GM12878 (cell line): ENCODE measurements at regions of chr16 and their contacts with region 1.

Region 1: DNA sequence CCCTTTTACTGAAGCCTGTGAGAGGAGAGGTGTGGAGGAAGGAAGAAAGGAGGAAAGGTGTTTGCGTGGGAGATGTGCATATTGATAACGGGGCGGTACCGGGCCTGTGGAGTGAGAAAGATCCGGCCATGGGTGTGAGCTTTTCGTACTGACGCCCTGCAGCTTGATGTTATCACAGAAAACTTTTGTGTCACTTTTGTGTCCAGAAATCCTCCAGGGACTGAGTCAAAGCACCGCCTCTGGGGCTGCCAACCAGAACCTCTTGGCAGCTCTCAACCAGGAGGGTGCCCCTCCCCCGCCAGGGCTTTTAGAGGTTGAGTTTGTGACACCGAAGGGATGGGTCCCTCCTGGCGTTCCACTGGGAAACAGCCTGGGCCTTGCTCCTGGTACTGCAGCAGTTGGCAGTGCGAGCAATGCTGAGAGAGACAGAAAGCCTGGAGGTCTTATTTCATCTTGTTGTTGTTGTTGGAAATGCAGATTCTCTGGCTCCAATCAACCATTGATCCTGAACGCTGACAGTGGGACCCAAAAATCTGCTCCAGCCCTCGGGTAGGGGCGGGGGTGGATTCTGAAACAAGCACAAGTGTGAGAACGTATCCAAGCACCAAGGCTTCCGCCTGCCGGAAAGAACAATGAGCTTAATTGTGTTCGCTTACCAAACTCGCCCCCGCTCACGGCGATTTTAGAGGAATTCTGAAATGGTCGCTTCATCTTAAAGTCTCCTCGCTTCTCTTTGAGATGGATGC is 65.0 kb downstream of the CRISPLD2 start:
- DNase-seq: no peak
- ATAC-seq: peak; percentile 66
- H3K4me3 ChIP-seq: no peak overlapping the region
- H3K27ac ChIP-seq: no peak overlapping the region
- H3K4me1 ChIP-seq: no peaks in the 10 kb centered on the region
- H3K27me3 ChIP-seq: peaks cover 0 to 2% of the 10 kb centered on the region in 2 experiments; a peak in 3 of 4 replicates
- CTCF ChIP-seq: no peak
- EP300 ChIP-seq: no peak
- POLR2A ChIP-seq: no peak
- RAD21 ChIP-seq: no peak

Region 2: GRCh38 chr16:84874004-84874435 is 10.7 kb before region 1 on chr16:
- CTCF ChIA-PET with region 1: interaction called, 5 read pairs
- POLR2A ChIA-PET with region 1: interaction called, 3 read pairs
- RAD21 ChIA-PET with region 1: no interaction called
- SMC1A ChIA-PET with region 1: interaction called, 19 read pairs
- in situ Hi-C with region 1: no loop called
- intact Hi-C with region 1: no loop called
- DNase-seq: no peak
- ATAC-seq: peak; percentile 44
- H3K4me3 ChIP-seq: no peak overlapping the region
- H3K27ac ChIP-seq: no peak overlapping the region
- H3K4me1 ChIP-seq: no peaks in the 10 kb centered on the region
- H3K27me3 ChIP-seq: no peaks in the 10 kb centered on the region; a peak in 1 of 4 replicates
- CTCF ChIP-seq: no peak
- EP300 ChIP-seq: no peak
- POLR2A ChIP-seq: no peak
- RAD21 ChIP-seq: no peak

Region 3: DNA sequence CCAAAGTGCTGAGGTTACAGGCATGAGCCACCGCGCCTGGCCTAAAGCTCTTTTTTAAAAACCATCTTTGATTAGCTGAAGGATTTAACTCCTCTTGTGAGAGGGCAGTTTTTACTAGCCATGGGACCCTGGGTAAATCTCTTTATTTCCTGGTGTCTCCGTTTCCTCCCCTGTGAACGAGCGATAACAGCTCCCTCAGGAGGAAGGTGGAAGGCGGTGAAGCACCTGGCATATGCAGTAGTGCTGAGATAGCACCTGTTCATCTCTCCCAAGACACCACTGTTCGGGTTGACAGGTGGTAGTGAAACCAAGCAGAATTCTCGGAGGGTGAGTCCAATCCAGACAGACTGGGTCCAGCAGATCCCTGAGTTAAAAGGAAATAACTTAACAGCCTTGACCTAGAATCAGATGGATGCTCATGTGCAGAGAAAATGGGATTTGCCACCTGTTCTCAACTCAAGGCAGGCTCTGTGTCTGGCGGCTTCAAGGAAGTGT is 21.2 kb after region 1 on chr16:
- CTCF ChIA-PET with region 1: no interaction called
- POLR2A ChIA-PET with region 1: no interaction called
- RAD21 ChIA-PET with region 1: no interaction called
- SMC1A ChIA-PET with region 1: no interaction called
- in situ Hi-C with region 1: no loop called
- intact Hi-C with region 1: no loop called
- DNase-seq: no peak
- ATAC-seq: no peak
- H3K4me3 ChIP-seq: no peak overlapping the region
- H3K27ac ChIP-seq: no peak overlapping the region
- H3K4me1 ChIP-seq: no peaks in the 10 kb centered on the region
- H3K27me3 ChIP-seq: no peaks in the 10 kb centered on the region
- CTCF ChIP-seq: no peak
- EP300 ChIP-seq: no peak
- POLR2A ChIP-seq: no peak
- RAD21 ChIP-seq: no peak

Region 4: DNA sequence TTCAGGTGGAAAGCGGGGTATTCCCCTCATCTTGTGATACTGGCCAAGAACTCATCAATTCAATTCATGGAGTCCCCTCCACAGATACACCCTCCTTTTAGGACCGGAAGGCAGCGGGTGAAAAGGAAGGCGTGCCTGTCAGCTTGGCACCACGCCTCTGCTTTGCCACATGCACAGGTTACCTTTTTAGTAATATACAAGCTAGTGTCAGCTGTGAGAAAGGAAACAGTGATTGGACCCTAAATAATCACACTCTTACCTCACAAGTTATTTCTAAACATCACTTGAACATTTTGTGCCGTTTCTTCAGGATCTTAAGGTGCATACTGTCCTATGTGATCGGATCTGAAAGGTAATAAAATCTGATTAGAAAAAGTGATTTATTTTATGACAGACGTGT is 110.9 kb after region 1 on chr16:
- CTCF ChIA-PET with region 1: no interaction called
- POLR2A ChIA-PET with region 1: no interaction called
- RAD21 ChIA-PET with region 1: no interaction called
- SMC1A ChIA-PET with region 1: no interaction called
- in situ Hi-C with region 1: no loop called
- intact Hi-C with region 1: no loop called
- DNase-seq: no peak
- ATAC-seq: no peak
- H3K4me3 ChIP-seq: no peak overlapping the region
- H3K27ac ChIP-seq: no peak overlapping the region
- H3K4me1 ChIP-seq: no peaks in the 10 kb centered on the region
- H3K27me3 ChIP-seq: no peaks in the 10 kb centered on the region
- CTCF ChIP-seq: no peak
- EP300 ChIP-seq: no peak
- POLR2A ChIP-seq: no peak
- RAD21 ChIP-seq: no peak